IMR-90 (cell line): ENCODE measurements at regions of chr6 and their contacts with region 1.

Region 1: DNA sequence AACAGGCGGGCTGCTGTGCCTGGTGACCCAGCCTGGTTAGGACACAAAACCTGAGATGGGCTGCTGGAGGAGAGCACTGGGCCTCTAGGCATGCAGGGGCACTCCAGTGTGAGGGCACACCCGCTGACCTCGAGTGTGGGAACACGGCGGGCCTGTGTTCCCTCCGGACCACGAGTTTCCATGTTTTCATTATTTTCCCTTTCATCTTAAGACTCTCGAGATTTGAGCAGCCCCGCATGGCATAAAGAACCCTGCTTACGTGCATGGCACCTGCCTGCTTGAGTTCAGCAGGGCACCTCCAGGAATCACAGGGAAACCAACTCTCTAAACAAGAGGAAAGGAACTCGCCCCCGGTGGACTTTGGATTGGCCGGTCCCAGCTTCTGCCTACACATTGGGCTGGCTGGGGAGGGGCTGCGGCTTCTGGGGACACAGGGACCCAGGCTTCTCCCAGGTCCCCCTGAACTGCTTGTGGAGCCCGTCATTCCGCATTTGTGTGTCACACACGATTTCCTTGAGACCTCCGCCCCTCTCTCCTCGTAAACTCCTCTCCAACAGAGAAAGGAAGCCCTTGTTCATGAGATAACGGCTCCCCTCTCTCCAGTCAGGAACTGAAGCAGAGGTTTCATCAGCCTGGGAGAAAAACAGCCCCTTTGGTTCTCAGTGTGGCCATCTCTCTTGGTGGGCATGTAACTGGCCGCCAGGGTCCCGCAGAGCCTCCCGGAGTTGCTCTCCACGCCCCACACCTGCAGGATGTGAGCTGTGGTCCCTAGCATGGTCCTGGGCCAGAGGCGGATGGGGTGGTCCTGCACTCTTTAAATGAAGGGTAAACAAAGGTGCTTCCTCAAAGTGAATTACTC is 181.8 kb downstream of the TTLL2 start:
- DNase-seq: no peak
- ATAC-seq: no peak
- H3K4me3 ChIP-seq: no peak overlapping the region
- H3K27ac ChIP-seq: no peak overlapping the region
- H3K4me1 ChIP-seq: no peaks in the 10 kb centered on the region
- H3K27me3 ChIP-seq: no peaks in the 10 kb centered on the region
- CTCF ChIP-seq: no peak
- POLR2A ChIP-seq: no peak
- RAD21 ChIP-seq: no peak

Region 2: GRCh38 chr6:167547751-167548150 is 41.1 kb after region 1 on chr6:
- CTCF ChIA-PET with region 1: no interaction called
- POLR2A ChIA-PET with region 1: no interaction called
- dilution Hi-C with region 1: no loop called
- in situ Hi-C with region 1: no loop called
- intact Hi-C with region 1: loop called (anchors 2 kb)
- DNase-seq: no peak
- ATAC-seq: no peak
- H3K4me3 ChIP-seq: no peak overlapping the region
- H3K27ac ChIP-seq: no peak overlapping the region
- H3K4me1 ChIP-seq: no peaks in the 10 kb centered on the region
- H3K27me3 ChIP-seq: no peaks in the 10 kb centered on the region
- CTCF ChIP-seq: no peak
- POLR2A ChIP-seq: no peak
- RAD21 ChIP-seq: no peak